Motor neuron (in vitro differentiated cells): ENCODE measurements at regions of chr5 and their contacts with region 1.

Region 1: DNA sequence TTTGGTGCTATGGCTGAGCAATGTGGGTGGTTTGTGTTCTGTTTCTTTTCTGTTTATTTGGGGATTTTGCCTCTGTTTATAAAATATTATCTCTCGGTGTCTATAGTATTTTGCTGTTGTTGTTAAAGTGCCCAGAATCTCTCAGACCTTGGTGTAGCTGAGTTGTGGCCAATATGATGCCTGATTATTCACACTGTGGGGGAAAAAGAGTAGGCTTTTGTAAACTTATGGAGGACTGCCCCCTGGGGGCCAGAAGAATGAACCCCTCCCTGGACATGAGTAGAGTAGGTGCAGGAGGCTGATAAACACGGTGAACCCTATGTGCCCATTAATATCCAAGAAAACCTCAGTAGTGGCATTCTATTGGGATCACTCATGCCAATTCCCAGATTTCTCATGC is 49.0 kb upstream of the DPYSL3 start:
- ATAC-seq: peak; percentile 66 to 90 (median 82)
- H3K4me3 ChIP-seq: no peak overlapping the region
- H3K27ac ChIP-seq: no peak overlapping the region
- H3K4me1 ChIP-seq: peaks cover 11 to 20% of the 10 kb centered on the region in 2 donors

Region 2: DNA sequence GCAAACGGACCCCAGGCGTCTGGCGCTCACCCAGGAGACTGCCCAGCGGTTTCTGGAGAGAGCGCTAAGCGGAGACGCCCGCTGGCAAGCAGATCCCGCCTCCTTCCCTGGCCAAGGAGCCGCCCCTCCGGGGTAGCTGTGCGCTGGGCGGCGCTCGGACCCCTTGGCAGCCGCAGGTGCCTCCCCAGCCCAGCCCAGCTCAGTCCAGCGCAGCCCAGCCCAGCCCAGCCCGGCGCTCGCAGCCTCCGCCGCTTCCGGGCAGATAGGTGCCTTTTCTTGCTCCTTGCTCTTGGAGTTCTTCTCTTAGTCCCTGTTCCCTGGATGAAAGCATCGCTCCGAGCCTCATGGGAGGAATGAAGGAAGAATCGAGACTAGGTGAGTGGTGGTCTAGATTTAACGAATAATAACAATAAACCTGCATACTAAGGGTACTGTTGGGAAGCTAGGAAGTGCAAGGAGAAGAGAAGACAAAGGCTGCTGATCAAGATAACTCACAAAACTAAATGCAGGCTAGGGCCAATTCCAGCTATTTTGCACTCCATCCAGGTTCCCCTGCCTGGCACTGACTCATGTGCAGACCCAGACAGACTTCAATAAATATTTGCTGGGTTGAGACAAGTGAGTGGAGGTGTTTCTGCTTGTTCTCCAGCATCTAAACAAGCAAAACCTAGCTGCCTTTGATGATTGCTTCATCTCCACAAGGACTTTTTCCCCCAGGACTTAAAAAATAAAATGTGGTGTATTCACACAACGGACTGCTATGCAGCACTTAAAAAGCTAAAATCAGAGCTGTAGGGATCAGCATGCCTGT is 323.8 kb before region 1 on chr5 and contains the start of gene STK32A:
- in situ Hi-C with region 1: loop called in 2 of 9 experiments (anchors 25 kb)
- ATAC-seq: peak; percentile 91 to 100 (median 99)
- H3K4me3 ChIP-seq: peak within 1 kb of the TSS; percentile 39 to 89 (median 48)
- H3K27ac ChIP-seq: peak within 1 kb of the TSS in 1 of 2 donors; percentile 47
- H3K4me1 ChIP-seq: peaks cover 2 to 6% of the 10 kb centered on the region in 2 donors
- total RNA-seq, gene STK32A: 4.2 to 58.6 (median 26.5) TPM

Region 3: DNA sequence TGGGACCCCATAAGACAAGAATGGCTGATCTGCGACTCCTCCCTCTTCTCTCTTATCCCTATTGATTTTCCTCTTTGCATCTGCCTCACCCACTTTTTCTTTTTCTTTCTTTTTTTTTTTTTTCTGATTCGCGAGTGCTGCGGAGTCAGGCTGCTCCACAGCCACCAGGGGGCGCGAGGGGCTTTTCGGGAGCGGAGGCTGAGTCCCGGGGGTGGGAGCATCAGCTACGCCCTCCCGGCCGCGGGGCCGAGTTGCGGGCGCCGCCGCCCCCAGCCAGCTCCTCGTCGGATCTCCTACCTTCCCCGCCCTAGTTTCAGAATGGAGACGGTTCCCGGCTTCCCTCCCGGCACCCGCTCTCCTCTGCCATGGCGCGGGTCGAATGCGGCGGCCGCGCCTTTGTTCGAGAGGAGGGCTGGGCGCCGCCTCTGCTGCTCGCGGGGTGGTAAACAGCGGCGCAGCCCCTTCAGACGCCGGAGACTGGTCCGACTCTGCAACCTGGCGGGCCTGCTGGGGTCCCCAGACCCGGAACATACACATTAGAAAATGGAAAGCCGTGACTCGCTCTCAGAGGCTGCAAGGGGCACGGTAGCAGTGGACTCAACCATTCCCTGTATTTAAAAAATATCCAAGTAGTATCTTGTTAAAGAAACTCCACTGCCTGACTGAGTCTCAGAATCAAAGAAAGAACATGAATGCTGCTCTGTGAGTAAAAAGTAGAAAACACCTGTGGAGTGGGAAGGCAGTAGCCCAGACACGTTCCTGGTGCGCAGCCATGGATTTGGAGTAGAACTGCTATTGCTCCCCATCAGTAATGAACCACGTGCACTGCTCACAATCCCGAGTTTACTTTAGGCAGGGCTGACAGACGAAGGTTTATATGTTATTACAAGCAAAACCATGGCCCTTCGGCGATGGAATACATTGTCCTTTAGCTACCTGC is 104.7 kb before region 1 on chr5:
- in situ Hi-C with region 1: loop called in 7 of 9 experiments (anchors 25 kb)
- ATAC-seq: peak; percentile 71 to 82 (median 80)
- H3K4me3 ChIP-seq: peak overlapping the region; percentile 58 to 97 (median 76)
- H3K27ac ChIP-seq: peak overlapping the region; percentile 91 to 94
- H3K4me1 ChIP-seq: peaks cover 11 to 26% of the 10 kb centered on the region in 2 donors

Region 4: GRCh38 chr5:147669169-147669869 is 110.5 kb after region 1 on chr5:
- in situ Hi-C with region 1: no loop called
- ATAC-seq: no peak
- H3K4me3 ChIP-seq: no peak overlapping the region
- H3K27ac ChIP-seq: no peak overlapping the region
- H3K4me1 ChIP-seq: no peaks in the 10 kb centered on the region

Region 5: DNA sequence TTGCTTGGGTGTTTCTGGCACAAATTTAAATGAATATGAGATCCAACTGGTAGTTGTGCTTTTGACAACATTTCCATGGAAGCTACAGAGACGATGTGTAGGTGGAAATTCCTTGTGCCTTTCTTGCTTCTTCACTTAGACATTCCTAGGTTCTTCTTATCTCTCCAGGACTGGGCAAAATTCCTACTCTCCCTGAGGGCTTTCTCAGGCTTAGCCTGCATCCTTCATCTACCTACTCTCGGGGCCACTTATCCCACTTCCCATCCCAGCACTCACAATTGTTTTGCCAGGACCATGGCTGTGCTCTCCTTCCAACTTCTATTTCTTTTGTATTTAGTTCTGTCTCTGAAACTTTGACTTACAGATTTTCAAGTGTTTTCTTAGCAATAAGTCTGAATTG is 290.4 kb after region 1 on chr5:
- in situ Hi-C with region 1: no loop called
- ATAC-seq: no peak
- H3K4me3 ChIP-seq: no peak overlapping the region
- H3K27ac ChIP-seq: no peak overlapping the region
- H3K4me1 ChIP-seq: no peaks in the 10 kb centered on the region